ENCODE measurements at regions of chr10 and their contacts with region 1.

Region 1: GRCh38 chr10:85212526-85212925 is 884.1 kb downstream of the CCSER2 start:
- DNase-seq: no peak
- H3K4me3 ChIP-seq: no peak overlapping the region
- H3K27ac ChIP-seq: no peak overlapping the region
- H3K4me1 ChIP-seq: no peaks in the 10 kb centered on the region
- H3K27me3 ChIP-seq: no peaks in the 10 kb centered on the region
- CTCF ChIP-seq: no peak

Region 2: DNA sequence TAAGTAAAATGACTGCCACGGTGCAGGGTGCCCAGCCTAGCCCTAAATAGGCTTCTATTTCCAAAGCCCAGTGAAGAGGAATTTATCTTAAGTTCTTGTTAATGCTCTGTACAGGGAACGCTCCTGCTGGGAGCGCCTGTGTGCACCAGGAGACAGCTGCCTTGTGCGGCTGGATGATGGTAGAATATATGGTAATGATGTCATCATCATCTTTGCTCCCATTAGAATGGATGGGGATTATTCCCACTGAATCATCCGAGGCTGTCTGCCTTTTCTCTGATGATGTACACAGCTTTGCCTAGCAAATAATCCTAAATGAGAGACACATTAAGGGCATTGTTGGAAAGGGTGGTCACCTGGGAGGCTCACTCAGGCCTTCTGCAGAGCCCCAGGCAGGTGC is 44.0 kb after region 1 on chr10:
- CTCF ChIA-PET with region 1: no interaction called
- dilution Hi-C with region 1: no loop called
- in situ Hi-C with region 1: no loop called
- intact Hi-C with region 1: no loop called
- DNase-seq: no peak
- H3K4me3 ChIP-seq: no peak overlapping the region
- H3K27ac ChIP-seq: no peak overlapping the region
- H3K4me1 ChIP-seq: no peaks in the 10 kb centered on the region
- H3K27me3 ChIP-seq: peaks cover 2% of the 10 kb centered on the region
- CTCF ChIP-seq: no peak

Region 3: DNA sequence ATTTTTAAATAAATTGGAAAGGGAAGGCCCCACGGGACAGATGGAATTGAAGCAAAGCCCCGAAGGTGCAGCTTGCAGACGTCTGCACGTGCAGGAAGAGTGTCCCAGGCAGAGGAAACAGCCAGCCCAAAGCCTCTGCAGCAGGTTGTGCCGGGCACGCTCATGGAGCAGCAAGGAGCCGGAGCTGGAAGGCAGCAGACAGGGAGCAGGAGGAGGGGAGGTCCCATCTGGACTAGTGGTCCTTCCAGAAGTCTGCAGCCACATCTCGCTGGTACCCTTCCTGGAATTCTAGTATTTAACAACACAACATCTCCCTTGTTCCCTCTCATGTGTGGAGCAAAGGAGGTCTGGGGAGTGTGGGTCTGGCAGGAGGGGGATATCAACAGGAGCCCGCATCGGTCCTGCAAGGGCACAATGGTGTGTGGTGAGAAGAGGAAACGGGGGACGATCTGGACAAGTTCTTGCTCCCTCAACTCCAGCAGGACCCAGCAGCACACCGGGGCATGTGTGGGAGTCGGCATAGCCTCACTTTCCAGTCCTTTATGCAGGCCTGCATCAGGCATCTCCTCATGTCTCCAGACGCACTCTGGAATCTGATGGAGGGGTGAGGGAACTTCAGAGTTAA is 984.8 kb after region 1 on chr10:
- CTCF ChIA-PET with region 1: no interaction called
- dilution Hi-C with region 1: no loop called
- in situ Hi-C with region 1: no loop called
- intact Hi-C with region 1: loop called (anchors 10 kb)
- DNase-seq: no peak
- H3K4me3 ChIP-seq: no peak overlapping the region
- H3K27ac ChIP-seq: no peak overlapping the region
- H3K4me1 ChIP-seq: no peaks in the 10 kb centered on the region
- H3K27me3 ChIP-seq: no peaks in the 10 kb centered on the region
- CTCF ChIP-seq: no peak

Measured in mammary epithelial cell (primary cell).